ENCODE measurements at regions of chr16 and their contacts with region 1.

Region 1: GRCh38 chr16:75622761-75623605 is at the start of gene ADAT1:
- DNase-seq: peak; percentile 99
- H3K4me3 Mint-ChIP-seq: peak within 1 kb of the TSS; percentile 95
- H3K27ac Mint-ChIP-seq: peak within 1 kb of the TSS; percentile 95
- H3K4me1 Mint-ChIP-seq: peaks cover 39% of the 10 kb centered on the region
- H3K27me3 Mint-ChIP-seq: no peaks in the 10 kb centered on the region
- total RNA-seq, gene ADAT1: 45.3 to 47.5 TPM

Region 2: GRCh38 chr16:74709441-74709877 is 913.5 kb before region 1 on chr16:
- CTCF ChIA-PET with region 1: no interaction called
- intact Hi-C with region 1: loop called (anchors 10 kb)
- DNase-seq: peak; percentile 91
- H3K4me3 Mint-ChIP-seq: no peak overlapping the region
- H3K27ac Mint-ChIP-seq: no peak overlapping the region
- H3K4me1 Mint-ChIP-seq: peaks cover 5% of the 10 kb centered on the region
- H3K27me3 Mint-ChIP-seq: no peaks in the 10 kb centered on the region

Region 3: GRCh38 chr16:75198135-75198600 is 424.8 kb before region 1 on chr16:
- CTCF ChIA-PET with region 1: interaction called, 6 read pairs
- intact Hi-C with region 1: loop called (anchors 1 kb)
- DNase-seq: no peak
- H3K4me3 Mint-ChIP-seq: no peak overlapping the region
- H3K27ac Mint-ChIP-seq: no peak overlapping the region
- H3K4me1 Mint-ChIP-seq: peaks cover 9% of the 10 kb centered on the region
- H3K27me3 Mint-ChIP-seq: peaks cover 13% of the 10 kb centered on the region

Region 4: DNA sequence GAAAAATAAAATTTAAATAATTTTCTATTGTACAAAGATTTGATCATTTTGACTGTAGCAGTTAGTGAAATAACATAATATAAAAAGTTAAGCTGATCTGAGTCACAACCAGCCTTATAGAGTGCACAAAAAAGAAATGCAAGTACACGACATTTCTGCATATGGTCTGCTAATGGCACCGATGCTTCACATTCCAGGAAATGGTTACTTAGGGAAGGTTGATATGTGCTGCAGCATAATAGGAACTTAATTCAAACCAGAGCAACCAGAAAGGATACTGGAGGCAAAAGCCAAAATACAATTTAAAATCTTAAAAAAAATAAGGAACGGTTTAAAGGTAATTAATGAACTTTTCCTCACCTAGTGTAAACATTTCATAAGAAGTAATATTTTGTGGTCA is 179.7 kb before region 1 on chr16:
- CTCF ChIA-PET with region 1: no interaction called
- intact Hi-C with region 1: no loop called
- DNase-seq: no peak
- H3K4me3 Mint-ChIP-seq: no peak overlapping the region
- H3K27ac Mint-ChIP-seq: no peak overlapping the region
- H3K4me1 Mint-ChIP-seq: no peaks in the 10 kb centered on the region
- H3K27me3 Mint-ChIP-seq: no peaks in the 10 kb centered on the region

Region 5: GRCh38 chr16:75555707-75556430 is 67.1 kb before region 1 on chr16 and contains the start of gene TMEM231:
- CTCF ChIA-PET with region 1: interaction called, 4 read pairs
- intact Hi-C with region 1: loop called (anchors 1 kb)
- DNase-seq: peak; percentile 98
- H3K4me3 Mint-ChIP-seq: peak within 1 kb of the TSS; percentile 87
- H3K27ac Mint-ChIP-seq: peak within 1 kb of the TSS; percentile 77
- H3K4me1 Mint-ChIP-seq: peaks cover 5% of the 10 kb centered on the region
- H3K27me3 Mint-ChIP-seq: peaks cover 8% of the 10 kb centered on the region
- total RNA-seq, gene TMEM231: 4.5 to 5.4 TPM

Region 6: GRCh38 chr16:75593825-75594820 is 28.9 kb before region 1 on chr16:
- CTCF ChIA-PET with region 1: interaction called, 6 read pairs
- intact Hi-C with region 1: loop called (anchors 2 kb)
- DNase-seq: peak; percentile 34
- H3K4me3 Mint-ChIP-seq: no peak overlapping the region
- H3K27ac Mint-ChIP-seq: peak overlapping the region; percentile 13
- H3K4me1 Mint-ChIP-seq: peaks cover 14% of the 10 kb centered on the region
- H3K27me3 Mint-ChIP-seq: no peaks in the 10 kb centered on the region

Region 7: DNA sequence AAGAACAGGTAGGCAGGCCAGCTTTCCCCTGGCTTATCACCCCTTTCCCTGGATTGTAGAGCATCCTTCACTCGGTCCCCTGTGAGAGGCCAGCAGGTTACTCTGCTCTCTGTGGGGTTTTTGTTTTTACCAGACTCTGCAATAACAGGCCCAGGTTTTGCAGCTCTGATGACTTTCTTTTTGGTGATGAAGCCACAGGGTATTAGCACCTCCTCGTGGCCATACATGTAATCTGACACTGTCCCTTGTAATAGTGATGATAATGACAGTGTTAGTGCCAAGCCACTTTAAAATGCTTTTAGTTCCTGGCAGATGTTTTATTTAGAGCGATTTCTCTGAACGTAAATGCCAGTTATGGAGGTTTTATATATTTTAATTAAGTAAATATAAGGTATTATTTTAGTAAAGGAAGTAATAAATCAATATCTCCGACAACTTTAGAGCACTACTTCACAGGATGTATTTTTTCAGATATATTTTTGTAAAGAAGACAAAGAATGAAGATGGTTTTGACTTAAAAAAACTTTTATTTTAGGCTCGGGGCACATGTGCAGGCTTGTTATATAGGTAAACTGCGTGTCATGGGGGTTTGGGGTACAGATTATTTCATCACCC is 141.3 kb after region 1 on chr16:
- CTCF ChIA-PET with region 1: interaction called, 5 read pairs
- intact Hi-C with region 1: loop called (anchors 1 kb)
- DNase-seq: peak; percentile 77
- H3K4me3 Mint-ChIP-seq: no peak overlapping the region
- H3K27ac Mint-ChIP-seq: no peak overlapping the region
- H3K4me1 Mint-ChIP-seq: peaks cover 12% of the 10 kb centered on the region
- H3K27me3 Mint-ChIP-seq: peaks cover 3% of the 10 kb centered on the region